ENCODE measurements at regions of chr12 and their contacts with region 1.

Region 1: DNA sequence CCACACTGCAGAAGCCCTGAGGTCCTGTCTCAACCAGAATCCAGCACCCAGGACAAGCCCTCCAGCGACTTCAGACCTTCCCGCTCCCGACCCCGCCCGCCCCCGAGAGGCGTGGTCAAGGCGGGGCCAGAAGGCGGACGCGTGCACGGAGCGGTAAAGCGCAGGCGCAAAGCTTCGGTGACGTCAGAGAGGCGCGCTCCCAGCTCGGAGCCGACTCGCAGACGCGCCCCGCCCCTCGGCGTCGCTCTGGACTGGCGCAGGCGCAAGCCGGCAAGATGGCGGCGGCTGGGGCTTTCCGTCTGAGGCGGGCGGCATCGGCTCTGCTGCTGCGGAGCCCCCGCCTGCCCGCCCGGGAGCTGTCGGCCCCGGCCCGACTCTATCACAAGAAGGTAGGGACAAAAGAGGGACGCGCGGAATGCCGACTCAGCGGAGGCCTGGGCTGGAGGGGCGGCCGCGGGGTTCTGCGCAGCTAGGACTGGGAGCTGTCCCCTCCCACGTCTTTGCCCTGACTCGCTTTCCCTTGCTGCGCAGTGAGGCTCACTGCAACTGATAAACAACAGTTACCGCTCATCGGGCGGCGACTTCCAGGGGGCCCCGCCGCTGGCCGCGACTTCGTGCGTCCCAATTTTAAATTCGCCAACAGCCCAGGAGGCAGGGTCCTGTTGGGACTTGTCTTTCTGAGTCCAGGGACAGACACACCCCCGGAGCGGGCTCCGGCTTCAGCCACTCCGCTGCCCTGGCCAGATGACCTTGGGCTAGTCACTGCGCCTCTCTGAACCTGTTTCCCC is at the start of gene ISCU:
- DNase-seq: peak; percentile 99
- ATAC-seq: peak; percentile 57
- H3K4me3 Mint-ChIP-seq: peak within 1 kb of the TSS; percentile 100
- H3K27ac Mint-ChIP-seq: peak within 1 kb of the TSS; percentile 100
- H3K4me1 Mint-ChIP-seq: peaks cover 48% of the 10 kb centered on the region
- H3K27me3 Mint-ChIP-seq: no peaks in the 10 kb centered on the region
- total RNA-seq, gene ISCU: 67.3 to 83.8 TPM

Region 2: DNA sequence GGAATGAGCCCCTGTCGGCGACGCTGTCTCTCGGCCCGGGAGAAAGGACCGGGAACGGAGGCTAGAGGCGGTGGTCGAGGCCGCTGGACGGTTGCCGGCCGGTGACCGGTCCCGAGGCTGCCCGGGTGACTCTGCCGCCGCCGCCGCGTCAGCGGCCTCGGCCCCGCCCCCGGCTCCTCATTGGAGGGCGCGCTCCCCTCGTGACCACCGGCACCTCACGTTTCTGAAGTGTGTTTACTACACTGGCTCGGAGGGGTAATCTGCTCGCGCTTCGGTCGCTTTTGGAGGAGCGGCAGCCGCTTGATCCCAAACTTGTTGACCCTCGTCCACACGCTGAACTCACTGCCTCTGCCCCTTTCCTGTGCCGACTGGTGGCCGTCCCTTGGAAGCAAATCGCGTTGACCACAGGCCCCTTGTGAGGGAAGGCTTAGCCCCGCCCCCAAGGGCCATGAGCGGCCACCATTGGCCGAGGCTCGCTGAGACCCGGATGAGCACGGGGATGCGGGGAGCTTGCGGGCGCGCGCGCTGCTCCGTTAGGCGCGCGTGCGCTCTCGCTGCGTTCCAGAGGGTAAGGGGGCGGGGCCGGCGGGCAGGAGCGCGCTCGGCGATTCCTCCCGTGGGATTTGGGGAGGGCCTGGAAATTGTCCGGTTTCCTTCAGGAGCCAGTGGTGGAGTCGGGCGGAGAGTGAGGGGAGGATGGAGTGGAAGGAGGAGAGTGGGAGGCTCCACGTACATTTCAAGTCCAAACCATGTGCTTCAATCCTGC is 1468.9 kb before region 1 on chr12 and contains the start of gene CRY1:
- CTCF ChIA-PET with region 1: no interaction called
- POLR2A ChIA-PET with region 1: no interaction called
- intact Hi-C with region 1: loop called in 1 of 2 experiments (anchors 5 kb)
- DNase-seq: peak; percentile 96
- ATAC-seq: peak; percentile 83
- H3K4me3 Mint-ChIP-seq: no peak within 1 kb of the TSS
- H3K27ac Mint-ChIP-seq: peak within 1 kb of the TSS; percentile 99
- H3K4me1 Mint-ChIP-seq: peaks cover 3% of the 10 kb centered on the region
- H3K27me3 Mint-ChIP-seq: peaks cover 7% of the 10 kb centered on the region
- total RNA-seq, gene CRY1: 14.8 to 17.7 TPM

Region 3: GRCh38 chr12:107760809-107761501 is 801.6 kb before region 1 on chr12 and contains the start of gene PRDM4:
- CTCF ChIA-PET with region 1: no interaction called
- POLR2A ChIA-PET with region 1: interaction called, 3 read pairs
- intact Hi-C with region 1: loop called in 1 of 2 experiments (anchors 2 kb)
- DNase-seq: peak; percentile 95
- ATAC-seq: peak; percentile 93
- H3K4me3 Mint-ChIP-seq: peak within 1 kb of the TSS; percentile 92
- H3K27ac Mint-ChIP-seq: peak within 1 kb of the TSS; percentile 91
- H3K4me1 Mint-ChIP-seq: peaks cover 27% of the 10 kb centered on the region
- H3K27me3 Mint-ChIP-seq: no peaks in the 10 kb centered on the region
- total RNA-seq, gene PRDM4: 27.5 to 29.7 TPM

Region 4: GRCh38 chr12:108664338-108665258 is 102.1 kb after region 1 on chr12:
- CTCF ChIA-PET with region 1: interaction called, 10 read pairs
- POLR2A ChIA-PET with region 1: no interaction called
- intact Hi-C with region 1: loop called in 1 of 2 experiments (anchors 1 kb)
- DNase-seq: peak; percentile 91
- ATAC-seq: peak; percentile 99
- H3K4me3 Mint-ChIP-seq: peak overlapping the region; percentile 18
- H3K27ac Mint-ChIP-seq: peak overlapping the region; percentile 84
- H3K4me1 Mint-ChIP-seq: peaks cover 29% of the 10 kb centered on the region
- H3K27me3 Mint-ChIP-seq: no peaks in the 10 kb centered on the region

Region 5: DNA sequence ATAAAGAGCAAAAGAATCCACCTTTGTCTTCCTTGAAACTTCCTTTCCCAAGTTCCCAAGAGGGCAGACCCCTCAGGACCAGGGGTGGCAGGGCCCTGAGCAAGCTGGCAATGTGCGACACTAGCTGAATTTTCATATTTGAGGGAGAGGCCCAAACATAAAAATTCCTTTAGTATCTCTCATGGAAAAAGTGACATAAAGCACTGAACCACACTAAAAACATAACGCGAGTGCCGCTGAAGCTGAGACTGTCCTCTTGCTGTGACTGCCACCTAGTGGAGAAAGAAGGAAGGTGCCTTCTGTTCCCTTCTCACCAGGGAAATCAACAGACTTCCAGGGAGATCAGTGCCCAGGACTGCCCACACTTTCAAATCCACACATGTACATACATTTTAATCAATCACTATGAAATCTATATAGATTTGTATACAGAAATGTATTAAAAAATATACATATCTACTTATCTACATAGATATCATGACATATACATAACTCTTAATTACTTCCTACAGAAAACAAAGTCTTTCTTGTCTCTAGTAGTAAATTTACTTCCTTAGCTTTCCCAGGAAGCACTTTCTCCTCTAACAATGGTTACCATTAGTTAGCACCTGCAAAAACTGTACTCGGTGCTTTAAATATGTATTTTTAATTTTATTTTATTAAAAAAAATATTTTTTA is 241.0 kb after region 1 on chr12:
- CTCF ChIA-PET with region 1: interaction called, 25 read pairs
- POLR2A ChIA-PET with region 1: no interaction called
- intact Hi-C with region 1: loop called (anchors 1 kb)
- DNase-seq: peak; percentile 80
- ATAC-seq: peak; percentile 91
- H3K4me3 Mint-ChIP-seq: no peak overlapping the region
- H3K27ac Mint-ChIP-seq: peak overlapping the region; percentile 37
- H3K4me1 Mint-ChIP-seq: peaks cover 6% of the 10 kb centered on the region
- H3K27me3 Mint-ChIP-seq: no peaks in the 10 kb centered on the region

Region 6: DNA sequence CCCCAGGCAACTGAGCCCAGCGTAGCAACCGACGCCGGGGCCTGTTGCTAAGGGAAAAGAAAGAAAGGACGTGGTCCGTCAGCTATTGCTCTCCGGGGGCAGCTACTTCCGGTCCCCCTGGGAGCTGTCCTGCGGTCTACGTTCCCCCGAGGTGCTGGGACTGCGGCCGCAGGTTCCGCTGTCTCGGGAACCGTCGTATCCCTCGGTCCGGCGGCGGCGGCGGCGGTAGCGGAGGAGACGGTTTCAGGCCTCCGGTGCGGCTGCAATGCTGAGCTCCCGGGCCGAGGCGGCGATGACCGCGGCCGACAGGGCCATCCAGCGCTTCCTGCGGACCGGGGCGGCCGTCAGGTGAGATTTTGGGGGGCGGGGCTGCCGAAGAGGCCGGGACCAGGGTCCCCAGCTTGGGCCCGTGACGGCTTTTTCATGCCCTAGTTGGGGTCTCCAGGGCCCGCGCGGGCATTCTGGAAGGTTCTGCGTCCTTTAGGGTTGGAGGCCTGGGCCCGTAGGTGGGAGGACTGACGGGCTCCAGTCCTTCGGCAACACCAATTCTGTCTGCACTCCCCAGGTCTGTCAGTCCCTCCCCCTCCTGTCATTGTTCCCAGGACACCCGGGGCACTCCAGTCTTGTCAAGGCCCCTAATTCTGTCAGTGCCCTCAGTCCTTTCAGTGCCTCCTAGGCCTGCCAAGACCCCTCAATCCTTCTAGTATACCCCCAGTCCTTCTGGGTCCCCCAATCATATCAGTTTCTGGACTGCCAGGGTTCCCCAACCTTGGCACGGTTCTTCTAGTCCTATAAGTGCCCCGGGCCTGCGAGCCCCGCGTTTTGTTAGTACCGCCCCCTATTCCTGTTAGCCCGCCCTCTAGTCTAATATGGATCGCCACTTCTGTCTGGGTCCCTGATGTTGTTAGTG is 490.1 kb after region 1 on chr12 and contains the start of gene USP30:
- CTCF ChIA-PET with region 1: interaction called, 3 read pairs
- POLR2A ChIA-PET with region 1: no interaction called
- intact Hi-C with region 1: loop called (anchors 1 to 5 kb)
- DNase-seq: peak; percentile 91
- ATAC-seq: peak; percentile 70
- H3K4me3 Mint-ChIP-seq: peak within 1 kb of the TSS; percentile 86
- H3K27ac Mint-ChIP-seq: peak within 1 kb of the TSS; percentile 97
- H3K4me1 Mint-ChIP-seq: peaks cover 6% of the 10 kb centered on the region
- H3K27me3 Mint-ChIP-seq: no peaks in the 10 kb centered on the region
- total RNA-seq, gene USP30: 9.2 to 14.5 TPM

Region 7: GRCh38 chr12:109573029-109573913 is 1010.7 kb after region 1 on chr12 and contains the starts of genes MMAB and MVK:
- CTCF ChIA-PET with region 1: no interaction called
- POLR2A ChIA-PET with region 1: no interaction called
- intact Hi-C with region 1: loop called (anchors 2 to 5 kb)
- DNase-seq: peak; percentile 99
- ATAC-seq: peak; percentile 97
- H3K4me3 Mint-ChIP-seq: peak within 1 kb of the TSS; percentile 90
- H3K27ac Mint-ChIP-seq: peak within 1 kb of the TSS; percentile 96
- H3K4me1 Mint-ChIP-seq: peaks cover 23% of the 10 kb centered on the region
- H3K27me3 Mint-ChIP-seq: no peaks in the 10 kb centered on the region
- total RNA-seq, gene MMAB: 37.7 to 44.3 TPM
- total RNA-seq, gene MVK: 17.8 to 18.7 TPM